Caki2 (cell line): ENCODE measurements at regions of chr3 and their contacts with region 1.

Region 1: DNA sequence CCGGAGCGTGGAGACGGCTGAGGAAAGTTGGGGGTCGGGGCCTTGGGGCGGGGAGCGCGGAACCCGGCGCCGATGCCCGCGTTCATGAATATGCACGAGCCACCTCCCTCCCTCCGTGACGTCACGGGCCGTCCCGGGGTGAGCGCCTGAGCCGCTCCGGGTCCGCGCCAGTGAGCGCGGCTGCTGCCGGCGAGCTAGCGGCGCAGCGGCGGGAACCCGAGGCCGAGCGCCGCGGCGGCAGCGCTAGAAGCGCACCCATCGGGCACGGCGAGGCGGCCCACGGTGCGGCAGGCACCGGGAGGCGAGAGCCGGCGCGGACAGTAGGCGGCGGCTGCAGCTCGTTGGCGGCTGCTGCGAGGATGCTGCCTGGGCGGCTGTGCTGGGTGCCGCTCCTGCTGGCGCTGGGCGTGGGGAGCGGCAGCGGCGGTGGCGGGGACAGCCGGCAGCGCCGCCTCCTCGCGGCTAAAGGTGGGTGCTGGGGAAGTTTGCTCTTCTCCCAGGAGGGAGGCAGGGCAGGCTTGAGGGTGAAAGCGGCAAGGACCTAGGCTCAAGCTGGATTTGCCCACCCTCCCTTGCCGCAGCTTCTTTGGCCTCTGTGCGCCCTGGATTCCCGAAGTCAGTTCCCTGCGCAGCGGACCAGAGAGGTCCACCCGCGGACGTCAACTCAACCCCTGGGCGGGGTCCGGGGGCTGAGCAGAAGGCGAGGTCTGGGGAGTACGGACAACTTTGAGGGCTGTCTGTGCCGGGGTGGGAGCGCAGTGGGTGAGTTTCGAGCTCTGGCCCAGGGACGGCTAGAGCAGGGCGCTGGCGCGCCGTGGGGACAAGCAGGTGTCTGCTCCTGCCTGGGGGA is at the start of gene CLSTN2:
- DNase-seq: peak; percentile 84
- total RNA-seq, gene CLSTN2: 29.7 and 37.8 TPM in 2 replicates

Region 2: GRCh38 chr3:139588450-139588849 is 346.8 kb before region 1 on chr3:
- in situ Hi-C with region 1: loop called (anchors 10 kb)
- DNase-seq: no peak

Region 3: DNA sequence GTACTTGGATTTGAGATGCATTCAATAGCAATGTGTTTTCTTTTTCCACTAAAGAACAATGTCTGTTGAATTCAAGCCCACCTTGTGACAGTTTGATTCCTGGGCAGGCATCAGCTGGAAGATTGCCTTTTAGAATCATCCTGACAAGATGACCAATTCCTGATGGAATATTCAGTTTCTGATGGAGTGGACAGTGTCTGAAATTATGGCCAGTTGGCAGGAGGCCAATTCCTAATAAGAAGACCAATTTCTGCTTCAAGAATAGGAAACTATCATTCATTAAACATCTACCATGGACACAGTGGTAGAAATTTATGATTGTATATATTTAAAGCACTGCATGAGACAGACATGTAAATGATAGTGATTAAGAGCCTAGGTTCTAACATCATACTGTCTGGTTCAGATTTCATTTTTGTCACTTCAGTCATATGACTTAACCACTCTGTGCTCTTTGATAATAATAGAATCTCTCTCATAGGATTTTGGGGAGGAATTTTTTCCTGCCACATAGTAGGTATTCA is 133.3 kb after region 1 on chr3:
- in situ Hi-C with region 1: no loop called
- DNase-seq: no peak

Region 4: DNA sequence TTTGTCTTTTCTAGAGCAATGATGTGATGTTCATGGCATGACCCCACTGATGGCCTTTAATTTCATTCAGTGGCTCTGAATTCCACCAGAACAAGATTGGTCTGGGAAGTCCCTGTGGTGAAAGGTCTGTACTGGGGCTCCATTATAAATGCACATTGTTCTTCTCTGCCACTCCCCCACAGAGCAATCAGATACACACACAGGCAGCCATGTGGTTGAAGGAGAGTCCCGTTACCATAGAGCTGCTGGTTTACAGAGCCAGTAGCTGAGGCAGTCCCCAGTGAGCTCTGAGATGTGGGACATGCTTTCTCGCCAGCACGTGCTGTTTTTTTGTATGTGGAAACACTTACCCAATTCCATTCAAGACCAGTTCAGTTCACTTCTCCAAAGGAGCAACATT is 570.0 kb after region 1 on chr3:
- in situ Hi-C with region 1: no loop called
- DNase-seq: peak; percentile 46